Transverse colon (tissue), 4 donors: ENCODE measurements at regions of chr10 and their contacts with region 1.

Region 1: GRCh38 chr10:13608246-13608853 is 21.6 kb downstream of the PRPF18 start:
- DNase-seq: no peak
- H3K4me3 ChIP-seq: no peak overlapping the region
- H3K27ac ChIP-seq: no peak overlapping the region
- H3K4me1 ChIP-seq: no peaks in the 10 kb centered on the region
- H3K27me3 ChIP-seq: no peaks in the 10 kb centered on the region
- CTCF ChIP-seq: no peak
- EP300 ChIP-seq: no peak
- POLR2A ChIP-seq: no peak

Region 2: DNA sequence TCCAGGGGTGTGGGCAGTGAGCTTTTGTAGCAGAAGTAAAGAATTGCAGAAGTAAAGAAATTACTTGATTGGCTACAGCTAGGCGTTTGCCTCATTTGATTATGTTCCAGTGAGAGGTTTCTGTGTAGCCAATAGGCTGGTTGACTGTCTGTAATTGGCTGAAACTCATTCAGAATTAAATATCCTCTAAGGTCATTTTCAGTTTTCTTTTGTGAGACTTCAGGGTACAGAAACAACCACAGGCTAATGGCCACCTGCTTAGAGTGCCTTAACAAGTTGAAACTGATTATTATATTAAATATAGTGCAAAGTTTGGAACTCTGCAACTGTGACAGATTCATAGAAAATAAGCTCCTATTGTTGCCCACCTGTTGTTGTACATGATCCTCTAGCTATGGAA is 1468.3 kb before region 1 on chr10:
- in situ Hi-C with region 1: no loop called
- intact Hi-C with region 1: loop called (anchors 10 kb)
- DNase-seq: no peak
- H3K4me3 ChIP-seq: no peak overlapping the region
- H3K27ac ChIP-seq: no peak overlapping the region
- H3K4me1 ChIP-seq: no peaks in the 10 kb centered on the region
- H3K27me3 ChIP-seq: no peaks in the 10 kb centered on the region
- CTCF ChIP-seq: no peak
- EP300 ChIP-seq: no peak
- POLR2A ChIP-seq: no peak

Region 3: DNA sequence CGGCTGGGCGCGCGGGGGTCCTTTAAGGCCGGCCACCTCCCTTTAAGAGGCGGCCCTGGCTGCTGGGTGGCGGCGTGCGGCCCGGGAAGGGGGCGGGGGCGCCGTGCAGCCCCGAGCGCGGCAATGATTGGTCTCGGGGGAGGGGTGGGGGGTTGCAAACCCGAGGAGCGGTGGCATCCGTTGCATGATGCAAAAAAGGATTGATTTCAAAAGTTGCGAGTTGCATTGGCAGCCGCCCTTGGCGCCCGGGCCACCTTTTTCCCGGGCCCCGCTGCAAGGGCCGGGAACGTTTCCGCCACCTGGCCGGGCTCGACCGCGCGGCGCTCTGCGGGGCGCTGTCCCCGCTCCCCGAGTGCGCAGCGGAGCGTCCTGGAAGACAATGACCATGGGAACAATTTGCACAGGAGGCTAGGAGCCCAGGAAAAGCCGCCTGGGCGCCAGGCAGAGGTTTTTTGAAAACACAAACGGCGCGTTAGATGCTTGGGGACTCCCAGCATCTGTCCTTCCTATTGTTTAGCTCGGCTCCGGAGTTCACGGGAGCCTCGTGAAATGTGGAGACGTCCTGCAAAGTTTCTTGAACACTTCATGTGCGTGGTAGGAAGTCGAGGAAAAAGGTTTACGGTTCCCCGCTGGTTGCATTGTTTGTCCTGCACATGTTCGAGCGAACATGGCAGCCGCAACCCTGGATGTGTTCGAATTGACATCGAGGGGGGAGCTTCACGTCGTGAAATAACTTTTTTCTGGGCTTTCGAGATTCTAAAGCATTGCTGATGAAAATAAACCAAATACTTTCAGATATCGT is 259.9 kb before region 1 on chr10 and contains the start of gene SEPHS1:
- in situ Hi-C with region 1: no loop called
- intact Hi-C with region 1: no loop called
- DNase-seq: peak; percentile 78
- H3K4me3 ChIP-seq: peak within 1 kb of the TSS; percentile 62 to 97 (median 85)
- H3K27ac ChIP-seq: peak within 1 kb of the TSS; percentile 95 to 99 (median 99)
- H3K4me1 ChIP-seq: peaks cover 7 to 37% (median 24%) of the 10 kb centered on the region in 4 donors
- H3K27me3 ChIP-seq: no peaks in the 10 kb centered on the region
- CTCF ChIP-seq: peak in 1 of 5 experiments; percentile 17
- EP300 ChIP-seq: no peak
- POLR2A ChIP-seq: peak; percentile 52
- total RNA-seq, gene SEPHS1: 14.6 to 44.6 (median 28.5) TPM